ENCODE measurements at regions of chr5 and their contacts with region 1.

Region 1: GRCh38 chr5:181159286-181159829 is 12.0 kb downstream of the OR2V2 start:
- DNase-seq: peak; percentile 84
- H3K4me3 ChIP-seq: no peak overlapping the region
- H3K27ac ChIP-seq: peak overlapping the region; percentile 90
- H3K4me1 ChIP-seq: peaks cover 4% of the 10 kb centered on the region
- H3K27me3 ChIP-seq: peaks cover 3% of the 10 kb centered on the region
- CTCF ChIP-seq: peak; percentile 80

Region 2: DNA sequence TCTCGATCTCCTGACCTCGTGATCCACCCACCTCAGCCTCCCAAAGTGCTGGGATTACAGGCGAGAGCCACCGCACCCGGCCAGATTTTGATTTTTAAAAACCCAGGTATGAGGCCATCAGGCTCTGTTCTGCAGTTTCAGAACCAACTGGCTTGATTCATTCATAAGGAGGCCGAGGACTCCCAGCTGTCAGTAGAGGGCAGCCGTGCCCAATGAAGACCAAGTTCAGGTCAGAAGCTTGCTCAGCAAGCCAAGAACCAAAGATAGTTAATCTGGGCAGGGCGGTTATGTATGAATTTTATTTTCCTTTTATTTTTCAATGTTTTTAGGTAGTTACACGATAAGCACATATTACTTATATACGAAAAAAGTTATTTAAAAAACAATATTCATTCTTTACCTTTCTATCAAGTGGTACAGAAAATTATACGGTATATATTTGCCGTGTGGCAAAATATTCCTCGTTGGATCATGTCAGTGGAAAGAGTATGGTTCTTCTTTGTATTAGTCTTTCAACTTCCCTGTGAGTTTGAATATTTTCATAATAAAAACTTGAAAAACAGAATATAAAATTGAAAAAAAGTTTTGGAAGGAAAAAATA is 374.8 kb before region 1 on chr5:
- CTCF ChIA-PET with region 1: no interaction called
- POLR2A ChIA-PET with region 1: no interaction called
- intact Hi-C with region 1: loop called (anchors 10 kb)
- DNase-seq: peak; percentile 59
- H3K4me3 ChIP-seq: no peak overlapping the region
- H3K27ac ChIP-seq: no peak overlapping the region
- H3K4me1 ChIP-seq: no peaks in the 10 kb centered on the region
- H3K27me3 ChIP-seq: no peaks in the 10 kb centered on the region
- CTCF ChIP-seq: peak; percentile 60

Region 3: DNA sequence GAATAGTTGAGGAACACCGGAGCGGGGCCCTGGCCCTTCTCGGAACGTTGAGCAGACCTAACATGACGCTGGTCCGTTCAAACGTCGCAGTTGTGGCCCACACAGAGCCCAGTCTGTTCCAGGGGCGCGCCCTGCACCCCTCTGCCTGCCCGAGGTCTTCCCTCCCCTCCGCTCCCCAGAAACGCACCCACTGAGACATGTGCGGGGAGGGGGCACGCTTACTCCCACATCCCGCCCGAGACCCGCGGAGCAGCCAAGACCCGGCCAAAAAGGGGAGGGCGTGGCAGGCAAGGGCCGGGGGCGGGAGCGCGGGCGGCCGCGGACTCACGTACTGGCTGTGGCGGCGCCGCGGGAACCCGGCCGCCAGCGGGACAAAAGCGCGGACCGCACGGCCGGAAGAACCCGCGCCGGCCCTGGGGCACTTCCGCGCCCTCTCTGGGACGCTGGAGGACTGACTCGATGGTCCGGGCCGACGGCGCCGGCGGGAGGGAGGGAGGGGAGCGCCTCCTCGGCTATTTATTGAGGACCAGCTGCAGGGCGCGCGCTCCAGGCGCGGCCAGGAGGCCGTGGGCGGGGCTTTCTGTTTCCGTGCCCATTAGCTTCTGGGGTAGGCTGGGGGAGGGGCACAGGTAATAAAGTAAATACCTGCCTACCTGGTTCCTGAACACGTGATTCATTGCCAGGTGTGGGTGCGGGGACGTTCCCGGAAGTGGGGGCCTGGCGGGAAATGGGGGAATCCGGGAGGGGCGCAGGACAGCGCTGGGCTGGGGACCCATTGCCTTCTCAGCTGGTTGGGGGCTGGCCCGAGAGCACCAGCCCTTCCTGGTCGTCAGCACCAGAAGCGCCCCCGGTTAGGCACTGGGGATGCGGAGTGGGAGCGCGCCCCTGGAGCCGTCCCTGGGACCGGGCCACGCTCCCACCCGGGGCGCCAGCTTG is 298.2 kb before region 1 on chr5 and contains the start of gene ZFP62:
- CTCF ChIA-PET with region 1: no interaction called
- POLR2A ChIA-PET with region 1: no interaction called
- intact Hi-C with region 1: loop called (anchors 10 kb)
- DNase-seq: peak; percentile 92
- H3K4me3 ChIP-seq: peak within 1 kb of the TSS; percentile 97
- H3K27ac ChIP-seq: peak within 1 kb of the TSS; percentile 86
- H3K4me1 ChIP-seq: peaks cover 5% of the 10 kb centered on the region
- H3K27me3 ChIP-seq: no peaks in the 10 kb centered on the region
- CTCF ChIP-seq: no peak
- total RNA-seq, gene ZFP62: 28.2 and 28.7 TPM in 2 replicates

Measured in A673 (cell line).